ENCODE measurements at regions of chr9 and their contacts with region 1.

Region 1: GRCh38 chr9:20242510-20243189 is 379.6 kb downstream of the MLLT3 start:
- DNase-seq: peak; percentile 36
- H3K4me3 Mint-ChIP-seq: peak overlapping the region; percentile 36
- H3K27ac Mint-ChIP-seq: peak overlapping the region; percentile 27
- H3K4me1 Mint-ChIP-seq: peaks cover 65% of the 10 kb centered on the region
- H3K27me3 Mint-ChIP-seq: peaks cover 2% of the 10 kb centered on the region

Region 2: DNA sequence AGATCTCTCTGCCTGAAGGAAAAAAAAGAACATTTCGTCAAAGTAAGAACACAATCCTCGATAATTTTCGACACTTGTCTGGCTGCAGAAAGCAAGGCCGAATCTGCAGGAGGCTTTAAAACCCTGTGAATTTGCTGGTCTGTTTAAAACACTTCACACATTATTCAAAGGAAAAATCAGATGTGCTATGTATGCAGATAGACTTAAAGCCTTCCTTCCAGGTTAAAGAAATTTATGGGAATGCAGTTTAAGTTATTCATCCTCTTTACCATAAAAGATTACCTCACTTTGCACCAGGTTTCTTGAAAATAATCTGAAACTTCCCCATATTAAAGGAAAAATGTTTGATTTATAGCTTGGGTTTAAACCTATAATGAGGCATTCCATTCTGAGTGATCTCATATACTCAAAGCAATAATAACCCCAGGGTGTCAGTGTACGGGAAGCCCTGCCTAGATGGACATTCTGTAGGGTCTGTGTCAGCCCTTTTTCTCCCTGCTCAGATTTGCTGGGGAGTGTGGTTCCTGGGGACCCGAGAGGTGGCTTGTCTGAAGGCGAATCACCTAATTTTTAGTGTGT is 130.4 kb before region 1 on chr9:
- intact Hi-C with region 1: no loop called
- DNase-seq: no peak
- H3K4me3 Mint-ChIP-seq: no peak overlapping the region
- H3K27ac Mint-ChIP-seq: no peak overlapping the region
- H3K4me1 Mint-ChIP-seq: no peaks in the 10 kb centered on the region
- H3K27me3 Mint-ChIP-seq: peaks cover 2% of the 10 kb centered on the region

Region 3: GRCh38 chr9:20225841-20226240 is 16.8 kb before region 1 on chr9:
- intact Hi-C with region 1: loop called (anchors 2 kb)
- DNase-seq: no peak
- H3K4me3 Mint-ChIP-seq: no peak overlapping the region
- H3K27ac Mint-ChIP-seq: no peak overlapping the region
- H3K4me1 Mint-ChIP-seq: peaks cover 55% of the 10 kb centered on the region
- H3K27me3 Mint-ChIP-seq: peaks cover 7% of the 10 kb centered on the region